Activated CD4-positive, alpha-beta T cell treated with anti-CD3 and anti-CD28 coated beads for 36 hours (primary cell): ENCODE measurements at regions of chr18 and their contacts with region 1.

Region 1: GRCh38 chr18:1585879-1586488 is 681.3 kb downstream of the ADCYAP1 start:
- DNase-seq: no peak
- ATAC-seq: peak; percentile 33
- H3K4me3 Mint-ChIP-seq: no peak overlapping the region
- H3K27ac Mint-ChIP-seq: no peak overlapping the region
- H3K4me1 Mint-ChIP-seq: no peaks in the 10 kb centered on the region
- H3K27me3 Mint-ChIP-seq: peaks cover 7% of the 10 kb centered on the region

Region 2: GRCh38 chr18:1177232-1177631 is 408.8 kb before region 1 on chr18:
- CTCF ChIA-PET with region 1: no interaction called
- POLR2A ChIA-PET with region 1: no interaction called
- intact Hi-C with region 1: no loop called
- DNase-seq: no peak
- ATAC-seq: no peak
- H3K4me3 Mint-ChIP-seq: no peak overlapping the region
- H3K27ac Mint-ChIP-seq: no peak overlapping the region
- H3K4me1 Mint-ChIP-seq: no peaks in the 10 kb centered on the region
- H3K27me3 Mint-ChIP-seq: no peaks in the 10 kb centered on the region

Region 3: DNA sequence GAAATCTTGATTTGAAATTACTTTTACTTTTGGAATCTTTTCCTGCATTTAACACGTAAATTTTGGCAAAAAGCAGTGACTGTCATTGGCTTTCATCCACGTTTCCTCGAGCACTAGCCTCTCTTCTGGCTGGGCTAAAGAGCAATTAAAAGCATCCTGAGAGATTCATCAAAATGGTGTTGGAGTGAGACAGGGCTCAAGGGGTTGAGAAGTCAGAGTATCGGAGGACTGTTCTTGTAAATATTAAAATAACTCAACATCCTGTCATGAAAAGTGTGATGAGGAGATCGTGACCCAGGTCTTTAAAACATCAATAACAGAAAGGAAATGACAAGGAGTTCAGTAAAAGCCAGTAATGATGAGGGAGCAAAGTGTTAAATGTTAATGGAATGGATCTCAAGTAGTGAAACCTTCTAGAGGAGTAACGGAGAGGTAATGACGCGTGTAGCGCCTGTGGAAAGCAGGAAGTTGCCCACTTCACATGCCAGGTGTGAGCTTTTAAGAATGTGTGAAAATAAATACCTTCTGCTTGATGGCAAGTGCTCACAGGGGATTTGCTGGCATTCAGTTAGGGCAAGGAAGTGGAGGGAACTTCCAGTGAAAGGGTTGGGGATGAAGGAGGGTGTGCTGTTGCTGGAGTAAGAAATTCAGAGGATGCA is 73.1 kb after region 1 on chr18:
- CTCF ChIA-PET with region 1: interaction called, 5 read pairs
- POLR2A ChIA-PET with region 1: no interaction called
- intact Hi-C with region 1: loop called in 1 of 2 experiments (anchors 10 kb)
- DNase-seq: no peak
- ATAC-seq: no peak
- H3K4me3 Mint-ChIP-seq: no peak overlapping the region
- H3K27ac Mint-ChIP-seq: no peak overlapping the region
- H3K4me1 Mint-ChIP-seq: no peaks in the 10 kb centered on the region
- H3K27me3 Mint-ChIP-seq: peaks cover 4% of the 10 kb centered on the region

Region 4: DNA sequence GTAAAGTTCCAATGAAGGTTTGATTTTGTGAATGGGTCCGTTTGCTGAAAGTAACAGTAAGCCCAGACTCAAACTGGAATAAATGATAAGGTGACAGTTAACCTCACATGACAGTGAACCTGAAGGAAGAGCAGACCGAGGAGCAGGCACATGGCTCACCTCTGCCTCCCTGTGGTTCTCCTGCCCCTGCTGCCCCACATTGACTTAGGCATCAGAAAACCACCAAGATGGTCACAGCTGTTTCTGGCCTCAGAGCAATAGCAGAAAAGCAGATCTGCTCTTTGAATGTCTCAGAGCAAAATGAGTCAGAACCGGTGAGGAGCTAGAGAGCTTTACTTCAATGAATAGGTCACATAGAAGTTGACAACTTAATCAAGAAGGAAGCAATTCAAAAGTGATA is 497.7 kb after region 1 on chr18:
- CTCF ChIA-PET with region 1: no interaction called
- POLR2A ChIA-PET with region 1: no interaction called
- intact Hi-C with region 1: loop called (anchors 5 kb)
- DNase-seq: peak; percentile 46
- ATAC-seq: peak; percentile 53
- H3K4me3 Mint-ChIP-seq: no peak overlapping the region
- H3K27ac Mint-ChIP-seq: no peak overlapping the region
- H3K4me1 Mint-ChIP-seq: no peaks in the 10 kb centered on the region
- H3K27me3 Mint-ChIP-seq: no peaks in the 10 kb centered on the region

Region 5: GRCh38 chr18:2139691-2140090 is 553.7 kb after region 1 on chr18:
- CTCF ChIA-PET with region 1: no interaction called
- POLR2A ChIA-PET with region 1: no interaction called
- intact Hi-C with region 1: no loop called
- DNase-seq: no peak
- ATAC-seq: no peak
- H3K4me3 Mint-ChIP-seq: no peak overlapping the region
- H3K27ac Mint-ChIP-seq: no peak overlapping the region
- H3K4me1 Mint-ChIP-seq: no peaks in the 10 kb centered on the region
- H3K27me3 Mint-ChIP-seq: peaks cover 12% of the 10 kb centered on the region

Region 6: DNA sequence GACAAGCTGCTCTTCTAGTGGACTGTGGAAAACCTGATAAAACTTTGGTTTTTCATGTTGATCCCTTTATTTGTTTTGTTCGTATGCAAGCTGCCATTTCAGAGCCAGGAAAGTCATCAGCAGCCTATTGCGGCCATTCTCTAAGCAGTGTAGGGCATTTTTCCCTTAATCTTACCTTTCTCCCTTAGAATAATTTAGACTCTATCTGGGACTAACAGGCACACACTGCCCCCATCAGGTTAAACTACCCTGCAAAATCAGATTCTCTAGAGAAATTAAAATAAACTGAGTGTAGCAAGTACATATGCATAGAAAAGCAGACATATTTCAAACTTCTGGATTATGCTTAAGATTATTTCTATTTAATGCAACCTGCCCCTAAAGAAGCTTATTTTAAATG is 637.9 kb after region 1 on chr18:
- CTCF ChIA-PET with region 1: interaction called, 3 read pairs
- POLR2A ChIA-PET with region 1: no interaction called
- intact Hi-C with region 1: loop called in 1 of 2 experiments (anchors 5 kb)
- DNase-seq: peak; percentile 22
- ATAC-seq: no peak
- H3K4me3 Mint-ChIP-seq: no peak overlapping the region
- H3K27ac Mint-ChIP-seq: no peak overlapping the region
- H3K4me1 Mint-ChIP-seq: no peaks in the 10 kb centered on the region
- H3K27me3 Mint-ChIP-seq: no peaks in the 10 kb centered on the region

Region 7: DNA sequence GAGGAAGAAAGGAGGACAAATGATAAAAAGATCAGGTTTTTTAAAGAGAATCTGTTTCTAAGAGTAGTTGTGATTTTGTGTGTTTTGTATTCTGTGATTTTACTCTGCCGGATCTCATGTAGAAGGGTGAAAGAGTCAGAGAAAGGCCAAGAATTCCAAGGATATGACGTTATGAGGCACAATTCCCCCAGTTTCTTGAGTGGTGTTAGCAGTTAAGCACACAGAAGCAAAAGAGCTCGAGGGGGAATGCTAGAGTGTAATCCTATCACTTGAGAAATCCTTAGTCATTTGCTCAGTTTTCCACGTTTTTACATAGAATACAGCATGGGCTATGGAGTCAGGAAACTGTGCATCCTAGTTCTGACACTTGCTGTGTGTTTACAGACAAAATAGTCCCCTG is 950.5 kb after region 1 on chr18:
- CTCF ChIA-PET with region 1: interaction called, 5 read pairs
- POLR2A ChIA-PET with region 1: no interaction called
- intact Hi-C with region 1: loop called (anchors 5 kb)
- DNase-seq: no peak
- ATAC-seq: no peak
- H3K4me3 Mint-ChIP-seq: no peak overlapping the region
- H3K27ac Mint-ChIP-seq: no peak overlapping the region
- H3K4me1 Mint-ChIP-seq: no peaks in the 10 kb centered on the region
- H3K27me3 Mint-ChIP-seq: no peaks in the 10 kb centered on the region